Activated naive CD4-positive, alpha-beta T cell treated with anti-CD3 and anti-CD28 coated beads for 36 hours (primary cell): ENCODE measurements at regions of chr17 and their contacts with region 1.

Region 1: GRCh38 chr17:49616601-49617131 is 41.0 kb downstream of the NXPH3 start:
- DNase-seq: no peak
- H3K4me3 Mint-ChIP-seq: no peak overlapping the region
- H3K27ac Mint-ChIP-seq: no peak overlapping the region
- H3K4me1 Mint-ChIP-seq: peaks cover 23% of the 10 kb centered on the region
- H3K27me3 Mint-ChIP-seq: no peaks in the 10 kb centered on the region

Region 2: DNA sequence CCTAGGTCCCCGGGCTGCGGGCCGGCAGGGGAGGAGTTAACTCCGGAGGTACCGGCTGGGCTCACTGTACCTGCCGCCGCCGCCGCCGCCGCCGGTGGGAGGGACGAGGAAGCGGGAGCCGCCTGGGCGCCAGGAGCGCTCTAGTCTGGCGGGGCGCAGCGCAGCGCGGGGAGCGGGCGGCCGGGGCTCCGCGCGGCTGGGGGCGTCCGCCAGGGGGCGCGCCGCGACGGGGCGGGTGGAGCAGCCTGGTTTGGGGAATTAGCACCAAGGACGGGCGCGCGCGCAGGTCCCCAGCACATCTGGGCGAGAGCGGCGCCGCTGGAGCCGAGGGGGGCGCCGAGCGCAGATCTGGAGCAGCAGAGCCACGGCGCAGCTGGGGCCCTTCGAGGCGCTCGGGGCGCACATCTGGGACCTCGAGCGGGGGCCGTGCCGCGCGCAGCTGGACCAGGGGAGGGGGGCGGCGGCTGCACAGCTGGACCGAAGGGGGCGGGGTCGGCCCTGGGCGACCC is 41.0 kb before region 1 on chr17 and contains the start of gene NXPH3:
- CTCF ChIA-PET with region 1: interaction called, 3 read pairs
- intact Hi-C with region 1: loop called (anchors 2 kb)
- DNase-seq: peak; percentile 77
- H3K4me3 Mint-ChIP-seq: peak within 1 kb of the TSS; percentile 76
- H3K27ac Mint-ChIP-seq: no peak within 1 kb of the TSS
- H3K4me1 Mint-ChIP-seq: peaks cover 15% of the 10 kb centered on the region
- H3K27me3 Mint-ChIP-seq: peaks cover 38% of the 10 kb centered on the region
- total RNA-seq, gene NXPH3: 0.25 to 0.26 TPM

Region 3: GRCh38 chr17:49637050-49637449 is 20.4 kb after region 1 on chr17:
- CTCF ChIA-PET with region 1: interaction called, 5 read pairs
- intact Hi-C with region 1: loop called (anchors 2 kb)
- DNase-seq: no peak
- H3K4me3 Mint-ChIP-seq: no peak overlapping the region
- H3K27ac Mint-ChIP-seq: peak overlapping the region; percentile 77
- H3K4me1 Mint-ChIP-seq: peaks cover 59% of the 10 kb centered on the region
- H3K27me3 Mint-ChIP-seq: no peaks in the 10 kb centered on the region

Region 4: DNA sequence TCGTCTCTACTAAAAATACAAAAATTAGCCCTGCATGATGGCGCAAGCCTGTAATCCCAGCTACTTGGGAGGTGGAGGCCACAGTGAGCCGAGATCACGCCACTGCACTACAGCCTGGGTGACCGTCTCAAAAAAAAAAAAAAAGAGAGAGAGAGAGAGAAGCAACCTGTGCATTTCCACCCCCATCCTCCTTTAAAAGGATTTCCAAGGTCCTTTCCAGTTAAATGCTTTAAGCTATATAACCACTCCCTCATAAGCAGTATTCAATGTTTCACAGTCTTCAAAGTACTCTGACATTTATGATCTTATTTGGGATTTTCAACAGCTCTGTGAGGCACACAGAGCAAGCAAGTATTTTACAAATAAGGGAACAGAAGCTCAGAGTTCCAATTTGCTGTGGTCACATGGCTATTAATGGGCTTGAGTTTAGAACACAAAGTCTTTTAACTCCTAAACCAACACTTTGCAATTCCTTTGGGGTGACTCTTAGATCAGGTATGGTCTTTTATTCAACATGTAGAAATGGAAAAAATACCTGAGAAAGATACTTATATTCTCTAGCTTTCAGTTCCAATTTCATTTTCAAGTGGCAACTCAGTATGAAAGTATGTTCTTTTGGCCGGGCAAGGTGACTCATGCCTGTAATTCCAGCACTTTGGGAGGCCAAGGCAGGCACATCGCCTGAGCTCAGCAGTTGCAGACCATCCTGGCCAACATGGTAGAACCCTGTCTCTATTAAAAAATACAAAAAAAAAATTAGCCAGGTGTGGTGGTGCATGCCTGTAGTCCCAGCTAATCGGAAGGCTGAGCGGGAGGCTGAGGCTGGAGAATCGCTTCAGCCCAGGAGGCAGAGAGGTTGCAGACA is 30.0 kb after region 1 on chr17:
- CTCF ChIA-PET with region 1: no interaction called
- intact Hi-C with region 1: loop called (anchors 5 kb)
- DNase-seq: peak; percentile 81
- H3K4me3 Mint-ChIP-seq: no peak overlapping the region
- H3K27ac Mint-ChIP-seq: peak overlapping the region; percentile 76
- H3K4me1 Mint-ChIP-seq: peaks cover 63% of the 10 kb centered on the region
- H3K27me3 Mint-ChIP-seq: no peaks in the 10 kb centered on the region

Region 5: DNA sequence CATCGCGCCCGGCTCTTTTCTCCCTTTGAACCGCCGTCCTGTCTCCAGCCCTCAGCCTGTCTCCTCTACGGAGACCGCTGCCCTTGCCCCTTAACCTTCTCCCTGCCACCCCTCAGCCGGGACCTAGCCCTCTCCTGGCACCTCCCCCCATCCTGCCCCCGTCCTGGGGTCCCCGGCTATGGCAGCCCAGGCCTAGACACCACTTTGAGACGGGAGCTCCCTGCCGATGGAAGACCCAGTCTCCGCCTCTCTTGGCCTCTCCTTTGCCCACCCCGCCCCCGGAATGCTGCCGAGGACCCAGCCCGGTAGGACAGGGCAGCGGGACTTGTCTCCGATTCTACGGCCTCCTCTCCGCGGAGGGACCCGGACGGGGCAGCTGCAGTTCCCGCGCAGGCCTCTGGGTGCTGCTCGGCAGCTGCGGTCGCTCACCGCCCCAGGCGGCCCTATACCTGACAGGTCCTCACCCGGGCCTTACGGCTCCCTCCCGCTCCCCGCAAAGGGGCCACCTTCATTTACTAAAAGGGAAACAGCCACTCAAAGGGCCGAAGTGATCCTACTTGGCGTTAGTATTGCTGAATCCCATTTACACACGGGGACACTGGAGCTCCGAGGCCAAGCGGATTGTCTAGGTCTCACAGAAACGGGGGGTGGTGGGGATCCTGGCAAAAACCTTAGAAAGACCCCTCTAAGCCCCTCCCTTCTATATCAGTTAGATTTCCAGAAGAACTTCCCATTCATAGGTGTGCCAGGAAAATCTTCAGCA is 263.8 kb after region 1 on chr17:
- CTCF ChIA-PET with region 1: no interaction called
- intact Hi-C with region 1: no loop called
- DNase-seq: peak; percentile 81
- H3K4me3 Mint-ChIP-seq: no peak overlapping the region
- H3K27ac Mint-ChIP-seq: no peak overlapping the region
- H3K4me1 Mint-ChIP-seq: peaks cover 7% of the 10 kb centered on the region
- H3K27me3 Mint-ChIP-seq: peaks cover 32% of the 10 kb centered on the region